GM12878 (cell line): ENCODE measurements at regions of chr4 and their contacts with region 1.

Region 1: DNA sequence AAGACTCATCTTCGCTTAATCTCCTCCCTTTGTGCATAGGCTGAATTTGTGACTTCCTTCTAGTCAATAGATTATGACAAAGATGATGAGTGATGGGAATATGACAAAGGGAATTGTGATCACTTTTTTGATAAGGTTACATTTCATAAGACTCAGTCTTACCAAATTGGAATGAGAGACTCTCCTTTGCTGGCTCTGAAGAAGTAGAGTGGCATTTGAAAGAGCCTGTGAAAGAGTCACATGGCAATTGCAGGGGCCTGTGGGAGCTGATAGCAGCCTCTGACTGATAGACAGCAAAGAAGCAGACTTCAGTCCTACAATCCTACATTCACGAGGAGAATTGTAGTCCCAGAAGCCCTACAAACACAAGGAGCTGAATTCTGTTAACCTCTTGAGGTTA is 44.9 kb upstream of the ADAMTS3 start:
- DNase-seq: no peak
- ATAC-seq: no peak
- H3K4me3 ChIP-seq: no peak overlapping the region
- H3K27ac ChIP-seq: no peak overlapping the region
- H3K4me1 ChIP-seq: no peaks in the 10 kb centered on the region
- H3K27me3 ChIP-seq: no peaks in the 10 kb centered on the region
- CTCF ChIP-seq: no peak
- EP300 ChIP-seq: no peak
- POLR2A ChIP-seq: no peak
- RAD21 ChIP-seq: no peak

Region 2: DNA sequence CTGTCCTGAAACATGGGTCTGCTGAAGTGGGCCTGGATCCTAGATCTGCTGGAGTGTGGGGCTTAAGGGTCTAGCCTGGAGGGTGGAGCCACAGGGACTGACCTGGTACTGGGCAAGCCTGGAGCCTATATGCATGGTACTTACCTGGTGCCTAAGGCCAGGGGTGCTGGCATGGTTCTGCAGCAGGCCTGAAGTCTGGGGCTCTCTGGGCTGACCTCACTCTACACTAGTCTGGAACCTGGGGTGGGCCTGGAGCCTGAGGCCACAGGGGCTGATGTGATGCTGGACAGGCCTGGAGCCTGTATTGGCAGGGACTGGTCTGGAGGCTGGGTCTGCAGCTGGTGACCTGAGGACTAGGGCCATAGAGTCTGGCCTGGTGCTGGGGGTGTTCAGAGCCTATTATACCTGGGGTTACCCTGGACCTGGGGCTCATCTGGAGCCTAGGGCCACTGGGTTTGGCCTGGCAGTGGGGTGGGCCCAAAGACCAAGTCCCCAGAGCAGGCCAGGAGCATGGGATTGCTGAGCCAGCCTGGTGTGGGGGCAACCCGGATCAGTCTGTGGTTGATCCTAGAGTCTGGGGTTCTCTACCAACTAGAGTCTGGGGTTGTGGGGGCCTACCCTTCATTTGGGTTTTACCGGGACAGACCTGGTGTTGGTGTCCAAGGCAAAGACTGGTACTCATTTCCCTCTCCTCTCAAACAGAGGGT is 1095.5 kb before region 1 on chr4:
- CTCF ChIA-PET with region 1: no interaction called
- POLR2A ChIA-PET with region 1: no interaction called
- RAD21 ChIA-PET with region 1: no interaction called
- SMC1A ChIA-PET with region 1: no interaction called
- in situ Hi-C with region 1: no loop called
- intact Hi-C with region 1: no loop called
- DNase-seq: no peak
- ATAC-seq: no peak
- H3K4me3 ChIP-seq: no peak overlapping the region
- H3K27ac ChIP-seq: no peak overlapping the region
- H3K4me1 ChIP-seq: no peaks in the 10 kb centered on the region
- H3K27me3 ChIP-seq: no peaks in the 10 kb centered on the region
- CTCF ChIP-seq: no peak
- EP300 ChIP-seq: no peak
- POLR2A ChIP-seq: no peak
- RAD21 ChIP-seq: no peak

Region 3: GRCh38 chr4:72679666-72680065 is 65.7 kb after region 1 on chr4:
- CTCF ChIA-PET with region 1: no interaction called
- POLR2A ChIA-PET with region 1: no interaction called
- RAD21 ChIA-PET with region 1: no interaction called
- SMC1A ChIA-PET with region 1: no interaction called
- in situ Hi-C with region 1: loop called (anchors 10 kb)
- intact Hi-C with region 1: no loop called
- DNase-seq: no peak
- ATAC-seq: no peak
- H3K4me3 ChIP-seq: no peak overlapping the region
- H3K27ac ChIP-seq: no peak overlapping the region
- H3K4me1 ChIP-seq: no peaks in the 10 kb centered on the region
- H3K27me3 ChIP-seq: no peaks in the 10 kb centered on the region
- CTCF ChIP-seq: no peak
- EP300 ChIP-seq: no peak
- POLR2A ChIP-seq: no peak
- RAD21 ChIP-seq: no peak